AG04449 (cell line): ENCODE measurements at regions of chr17 and their contacts with region 1.

Region 1: DNA sequence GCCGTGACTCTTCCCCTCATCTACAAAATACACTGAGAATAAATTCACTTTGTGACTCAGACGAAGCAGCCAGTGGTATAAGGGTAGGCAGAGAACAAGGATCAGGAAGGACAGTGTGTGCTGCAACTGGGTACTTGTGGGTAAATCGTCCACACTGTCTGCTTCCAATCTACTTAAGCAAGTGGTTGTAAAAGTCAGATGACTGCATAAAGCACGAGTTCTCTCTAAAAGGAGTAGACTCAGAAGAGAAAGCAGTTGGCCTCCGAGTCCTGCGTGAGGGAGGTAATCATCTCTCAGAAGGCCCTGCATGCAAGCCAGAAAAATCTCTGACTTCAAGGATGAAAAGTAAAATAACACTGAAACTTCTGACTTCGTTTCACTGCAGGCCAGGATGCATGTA is 43.1 kb downstream of the ANKFY1 start:
- DNase-seq: no peak
- H3K4me3 ChIP-seq: no peak overlapping the region
- CTCF ChIP-seq: no peak

Region 2: GRCh38 chr17:4127555-4127954 is 93.1 kb before region 1 on chr17:
- CTCF ChIA-PET with region 1: no interaction called
- POLR2A ChIA-PET with region 1: no interaction called
- DNase-seq: no peak
- H3K4me3 ChIP-seq: no peak overlapping the region
- CTCF ChIP-seq: no peak

Region 3: GRCh38 chr17:4199818-4200402 is 20.7 kb before region 1 on chr17:
- CTCF ChIA-PET with region 1: interaction called, 38 read pairs
- POLR2A ChIA-PET with region 1: no interaction called
- DNase-seq: no peak
- H3K4me3 ChIP-seq: no peak overlapping the region
- CTCF ChIP-seq: peak; percentile 74

Region 4: DNA sequence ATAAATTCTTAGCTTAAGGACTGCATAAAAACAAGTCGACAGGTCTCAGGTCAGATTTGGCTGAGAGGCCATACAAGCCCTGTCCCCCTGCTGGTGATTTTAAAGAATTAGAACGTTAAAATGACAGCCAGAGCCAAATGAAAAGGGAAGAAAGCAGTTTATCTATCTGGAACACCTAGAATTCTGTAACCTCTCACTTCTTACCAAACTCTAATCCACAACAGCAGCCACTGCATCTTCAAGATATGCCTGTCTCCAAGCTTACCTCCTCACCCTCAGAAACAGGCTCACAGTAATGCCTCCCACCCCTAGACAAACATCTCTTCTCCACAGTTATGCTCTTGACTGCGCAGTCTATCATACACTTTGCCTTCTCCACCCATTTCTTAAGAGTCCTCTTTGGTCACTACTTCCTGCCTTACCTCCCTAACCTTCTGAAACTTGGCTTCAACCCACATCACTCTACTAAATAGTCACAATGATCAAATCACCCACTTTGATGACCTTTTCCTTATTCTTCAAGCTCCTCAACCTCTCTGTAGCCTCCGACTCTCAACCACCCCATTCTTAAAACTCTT is 28.9 kb after region 1 on chr17:
- CTCF ChIA-PET with region 1: interaction called, 70 read pairs
- POLR2A ChIA-PET with region 1: no interaction called
- DNase-seq: no peak
- H3K4me3 ChIP-seq: no peak overlapping the region
- CTCF ChIP-seq: peak; percentile 41

Region 5: DNA sequence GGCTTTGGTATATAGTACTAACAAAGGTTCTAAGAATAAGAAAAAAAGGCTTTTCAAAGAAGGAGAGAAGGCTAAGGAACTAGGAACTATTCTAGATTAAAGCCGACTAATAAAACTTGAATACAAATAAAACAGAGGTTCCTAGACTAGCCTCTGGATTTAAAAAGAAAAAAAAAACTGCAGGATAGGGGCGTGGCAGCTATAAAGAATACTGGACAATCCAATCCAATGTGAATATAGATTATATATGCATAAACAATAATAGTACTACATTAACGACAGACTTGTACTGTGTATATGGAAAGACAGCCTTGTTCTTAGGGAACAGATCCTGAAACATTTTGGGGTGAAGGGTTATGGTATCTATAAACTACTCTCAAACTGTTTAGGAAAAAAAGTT is 67.1 kb after region 1 on chr17:
- CTCF ChIA-PET with region 1: interaction called, 12 read pairs
- POLR2A ChIA-PET with region 1: no interaction called
- DNase-seq: no peak
- H3K4me3 ChIP-seq: no peak overlapping the region
- CTCF ChIP-seq: no peak

Region 6: GRCh38 chr17:4304417-4305027 is 83.9 kb after region 1 on chr17:
- CTCF ChIA-PET with region 1: interaction called, 22 read pairs
- POLR2A ChIA-PET with region 1: no interaction called
- DNase-seq: no peak
- H3K4me3 ChIP-seq: no peak overlapping the region
- CTCF ChIP-seq: peak; percentile 60

Region 7: DNA sequence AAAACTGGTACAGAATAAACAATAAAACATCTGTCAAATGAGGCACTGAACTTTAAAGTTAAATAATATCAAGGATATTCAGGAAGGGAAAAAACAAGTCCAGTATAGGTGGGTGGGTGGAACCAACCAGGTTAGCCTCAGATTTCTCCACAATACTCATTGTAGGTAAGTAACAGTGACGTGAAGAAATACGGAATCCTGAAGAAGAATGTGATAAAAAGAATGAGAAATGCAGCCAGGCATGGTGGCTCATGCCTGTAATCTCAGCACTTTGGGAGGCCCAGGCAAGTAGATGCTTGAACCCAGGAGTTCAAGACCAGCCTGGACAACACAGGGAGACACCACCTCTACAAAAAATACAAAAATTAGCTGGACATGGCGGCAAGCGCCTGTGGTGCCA is 98.6 kb after region 1 on chr17:
- CTCF ChIA-PET with region 1: no interaction called
- POLR2A ChIA-PET with region 1: no interaction called
- DNase-seq: no peak
- H3K4me3 ChIP-seq: no peak overlapping the region
- CTCF ChIP-seq: no peak

Region 8: GRCh38 chr17:4386406-4386805 is 165.8 kb after region 1 on chr17:
- CTCF ChIA-PET with region 1: no interaction called
- POLR2A ChIA-PET with region 1: no interaction called
- DNase-seq: peak; percentile 7
- H3K4me3 ChIP-seq: no peak overlapping the region
- CTCF ChIP-seq: no peak